ENCODE measurements at regions of chr16 and their contacts with region 1.

Region 1: GRCh38 chr16:84738255-84739038 is 38.6 kb downstream of the USP10 start:
- DNase-seq: peak; percentile 85
- H3K4me3 Mint-ChIP-seq: no peak overlapping the region
- H3K27ac Mint-ChIP-seq: peak overlapping the region; percentile 15
- H3K4me1 Mint-ChIP-seq: peaks cover 60% of the 10 kb centered on the region
- H3K27me3 Mint-ChIP-seq: no peaks in the 10 kb centered on the region

Region 2: GRCh38 chr16:84504420-84505248 is 233.8 kb before region 1 on chr16 and contains the start of gene MEAK7:
- CTCF ChIA-PET with region 1: interaction called, 15 read pairs
- DNase-seq: peak; percentile 98
- H3K4me3 Mint-ChIP-seq: peak within 1 kb of the TSS; percentile 81
- H3K27ac Mint-ChIP-seq: peak within 1 kb of the TSS; percentile 79
- H3K4me1 Mint-ChIP-seq: peaks cover 66% of the 10 kb centered on the region
- H3K27me3 Mint-ChIP-seq: peaks cover 5% of the 10 kb centered on the region

Region 3: DNA sequence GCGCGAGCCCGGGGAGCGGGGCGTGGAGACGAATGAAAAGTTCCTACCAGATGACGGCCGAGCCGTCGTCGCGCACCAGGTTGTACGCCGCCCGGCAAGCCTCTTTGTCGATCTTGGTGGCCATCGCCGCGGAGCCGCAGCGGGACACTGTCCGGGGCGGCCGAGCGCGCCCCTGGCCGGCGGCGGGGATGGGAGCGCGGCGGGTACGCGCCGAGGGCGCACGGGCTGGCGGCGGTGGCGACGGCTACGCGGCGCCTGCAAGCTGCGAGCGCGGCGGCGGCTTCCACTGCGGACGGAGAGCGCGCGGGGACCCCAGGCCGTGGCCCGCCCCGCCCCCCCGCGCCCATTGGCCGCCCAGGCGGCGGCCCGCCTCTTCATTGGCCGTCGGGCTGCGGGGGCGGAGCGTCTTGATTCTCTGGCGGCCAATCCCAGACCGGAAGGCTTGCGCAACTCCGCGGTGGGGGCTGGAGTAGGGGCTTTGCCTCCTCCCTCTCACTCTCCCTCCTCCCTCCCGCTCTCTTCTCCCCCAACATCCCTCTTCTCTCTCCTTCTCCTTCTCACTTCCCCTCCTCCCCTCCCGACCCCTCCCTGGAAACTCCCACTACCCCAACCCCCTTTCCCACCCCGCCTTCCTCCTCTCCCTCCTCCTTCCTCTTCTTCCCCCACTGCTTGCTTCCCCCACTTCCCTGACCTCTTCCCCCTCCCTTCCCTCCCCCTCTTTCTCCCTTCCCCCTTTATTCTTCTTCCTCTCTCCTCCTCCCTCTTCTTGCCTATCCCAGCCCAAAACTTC is 120.5 kb before region 1 on chr16 and contains the start of gene COTL1:
- CTCF ChIA-PET with region 1: interaction called, 66 read pairs
- DNase-seq: peak; percentile 96
- H3K4me3 Mint-ChIP-seq: peak within 1 kb of the TSS; percentile 96
- H3K27ac Mint-ChIP-seq: peak within 1 kb of the TSS; percentile 88
- H3K4me1 Mint-ChIP-seq: peaks cover 63% of the 10 kb centered on the region
- H3K27me3 Mint-ChIP-seq: peaks cover 31% of the 10 kb centered on the region

Region 4: GRCh38 chr16:84720177-84720579 is 18.3 kb before region 1 on chr16:
- CTCF ChIA-PET with region 1: interaction called, 47 read pairs
- DNase-seq: no peak
- H3K4me3 Mint-ChIP-seq: no peak overlapping the region
- H3K27ac Mint-ChIP-seq: no peak overlapping the region
- H3K4me1 Mint-ChIP-seq: peaks cover 48% of the 10 kb centered on the region
- H3K27me3 Mint-ChIP-seq: no peaks in the 10 kb centered on the region

Region 5: GRCh38 chr16:84754353-84754856 is 16.0 kb after region 1 on chr16:
- CTCF ChIA-PET with region 1: interaction called, 87 read pairs
- DNase-seq: peak; percentile 81
- H3K4me3 Mint-ChIP-seq: peak overlapping the region; percentile 27
- H3K27ac Mint-ChIP-seq: peak overlapping the region; percentile 64
- H3K4me1 Mint-ChIP-seq: peaks cover 80% of the 10 kb centered on the region
- H3K27me3 Mint-ChIP-seq: no peaks in the 10 kb centered on the region

Region 6: DNA sequence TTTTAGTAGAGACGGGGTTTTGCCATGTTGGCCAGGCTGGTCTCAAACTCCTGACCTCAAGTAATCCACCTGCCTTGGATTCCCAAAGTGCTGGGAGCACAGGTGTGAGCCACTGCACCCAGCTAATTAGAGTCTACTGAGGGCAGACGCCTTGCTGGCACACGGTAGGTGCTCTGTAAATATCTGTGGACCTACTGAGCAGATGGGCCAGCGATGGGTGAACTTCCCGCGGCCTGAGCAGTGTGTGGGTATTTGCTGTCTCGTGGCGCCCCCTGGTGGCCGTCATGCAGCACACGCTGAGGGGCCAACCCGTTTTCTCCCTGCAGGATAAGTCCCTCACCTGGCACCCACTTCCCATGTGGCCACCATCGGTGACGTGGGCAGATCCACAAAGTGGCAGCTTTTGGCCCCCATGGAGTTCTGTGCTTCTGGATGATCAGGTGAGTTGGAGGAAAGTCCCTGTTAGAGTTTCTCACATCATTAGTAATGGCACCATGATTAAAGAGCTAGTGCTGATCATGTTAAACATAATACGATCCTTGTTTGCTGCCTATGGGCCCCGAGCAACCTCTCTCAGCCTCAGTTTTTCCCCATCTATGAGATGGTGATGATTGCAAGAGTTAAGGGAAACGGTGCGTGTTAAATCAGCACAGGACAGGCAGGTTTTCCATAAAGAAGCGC is 232.1 kb after region 1 on chr16:
- CTCF ChIA-PET with region 1: interaction called, 32 read pairs
- DNase-seq: peak; percentile 84
- H3K4me3 Mint-ChIP-seq: no peak overlapping the region
- H3K27ac Mint-ChIP-seq: no peak overlapping the region
- H3K4me1 Mint-ChIP-seq: peaks cover 4% of the 10 kb centered on the region
- H3K27me3 Mint-ChIP-seq: peaks cover 24% of the 10 kb centered on the region

Measured in activated naive CD4-positive, alpha-beta T cell treated with anti-CD3 and anti-CD28 coated beads, Interleukin-2, amount 10 ng/mL, durations not matched to agents 7 days and 5 days (primary cell).